ENCODE measurements at regions of chr7 and their contacts with region 1.

Region 1: DNA sequence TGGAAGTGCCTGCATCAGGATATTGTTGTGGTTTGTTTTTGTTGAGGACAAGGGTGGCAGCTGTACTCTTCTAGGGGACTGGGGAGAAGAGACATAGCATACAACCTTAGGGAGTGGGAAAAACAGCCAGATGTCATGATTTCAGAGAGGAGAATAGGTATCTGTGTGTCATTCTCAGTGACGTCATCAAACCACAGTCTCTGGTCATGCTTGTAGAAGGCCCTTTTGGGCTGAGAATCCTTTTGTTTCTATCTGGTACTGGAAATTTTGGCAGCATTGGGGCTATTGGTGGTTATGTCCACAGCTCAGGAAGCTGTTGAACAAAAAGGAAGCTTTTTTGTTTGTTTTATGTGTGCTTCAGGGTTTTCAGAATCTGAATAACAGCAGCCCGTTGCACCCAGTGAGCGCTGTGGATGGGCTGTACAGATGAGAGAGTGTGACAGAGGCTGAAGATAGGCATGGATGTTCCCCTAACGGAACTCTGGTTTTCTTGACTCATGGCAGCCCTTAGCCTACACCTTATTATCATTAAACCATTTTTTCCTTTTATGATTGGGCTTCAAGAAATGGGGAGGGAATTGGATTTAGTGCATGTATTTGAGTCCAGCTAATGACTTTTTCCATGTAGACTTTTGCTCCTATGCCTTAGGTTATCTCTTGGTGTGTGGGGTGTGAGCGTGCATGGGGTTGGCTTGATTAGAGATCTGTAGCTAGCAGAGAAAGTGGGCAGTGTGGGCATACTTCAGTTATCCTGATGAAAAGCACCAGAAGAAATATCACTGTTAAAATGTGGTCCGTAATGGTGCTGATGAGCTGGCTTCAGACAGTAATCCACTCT is 65.7 kb downstream of the SND1 start:
- DNase-seq: no peak
- ATAC-seq: no peak

Region 2: GRCh38 chr7:127792528-127793342 is 75.0 kb after region 1 on chr7:
- intact Hi-C with region 1: no loop called
- DNase-seq: no peak
- ATAC-seq: no peak

Region 3: GRCh38 chr7:128135515-128136214 is 417.9 kb after region 1 on chr7:
- intact Hi-C with region 1: loop called (anchors 10 kb)
- DNase-seq: peak; percentile 69
- ATAC-seq: peak; percentile 98